ENCODE measurements at regions of chr2 and their contacts with region 1.

Region 1: DNA sequence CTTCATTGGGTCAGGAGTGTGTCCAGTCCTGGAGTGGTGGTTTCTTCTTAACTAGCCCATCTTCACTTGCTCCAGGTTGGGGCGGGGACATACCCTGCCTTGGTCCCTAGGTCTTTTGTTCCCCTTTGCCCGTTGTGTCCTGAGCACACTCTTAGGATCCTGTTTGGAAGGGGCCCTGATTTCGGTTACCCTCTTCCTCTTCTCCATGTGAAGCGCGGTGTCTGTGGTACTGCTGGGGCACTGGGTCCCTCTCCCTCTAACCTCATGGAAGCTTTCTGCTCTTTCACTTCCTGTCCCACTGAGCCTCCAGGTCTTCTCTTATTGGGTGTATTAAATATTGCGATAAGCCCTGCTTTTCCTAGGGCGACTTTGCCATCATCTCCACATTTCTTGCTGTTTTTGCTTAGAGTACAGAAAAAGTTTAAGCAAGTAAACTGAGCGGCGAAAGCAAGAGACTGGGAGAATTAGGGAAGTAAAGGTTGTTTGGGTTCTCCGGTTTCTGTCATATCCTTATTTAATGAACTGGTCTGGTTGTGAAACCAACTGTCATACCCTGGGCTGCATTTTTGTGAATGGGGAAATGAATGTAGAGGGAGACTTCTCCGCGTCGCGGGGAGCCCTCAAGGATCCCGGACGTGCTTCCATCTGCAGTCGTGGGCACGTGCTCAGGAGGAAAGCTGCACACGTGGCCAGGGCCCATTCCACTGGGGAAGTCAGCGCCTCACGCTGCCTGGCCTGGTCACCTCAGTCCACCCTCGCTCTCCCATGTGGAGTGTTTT is 73.8 kb upstream of the B3GNT7 start:
- DNase-seq: no peak
- ATAC-seq: no peak
- H3K4me3 ChIP-seq: no peak overlapping the region
- H3K27ac ChIP-seq: no peak overlapping the region
- H3K4me1 ChIP-seq: no peaks in the 10 kb centered on the region
- H3K27me3 ChIP-seq: no peaks in the 10 kb centered on the region
- CTCF ChIP-seq: no peak

Region 2: GRCh38 chr2:231245253-231246094 is 76.3 kb before region 1 on chr2:
- CTCF ChIA-PET with region 1: no interaction called
- POLR2A ChIA-PET with region 1: no interaction called
- in situ Hi-C with region 1: no loop called
- intact Hi-C with region 1: no loop called
- DNase-seq: no peak
- ATAC-seq: peak; percentile 70
- H3K4me3 ChIP-seq: no peak overlapping the region
- H3K27ac ChIP-seq: no peak overlapping the region
- H3K4me1 ChIP-seq: no peaks in the 10 kb centered on the region
- H3K27me3 ChIP-seq: no peaks in the 10 kb centered on the region
- CTCF ChIP-seq: no peak; the same call in 1 of the 2 replicates

Region 3: DNA sequence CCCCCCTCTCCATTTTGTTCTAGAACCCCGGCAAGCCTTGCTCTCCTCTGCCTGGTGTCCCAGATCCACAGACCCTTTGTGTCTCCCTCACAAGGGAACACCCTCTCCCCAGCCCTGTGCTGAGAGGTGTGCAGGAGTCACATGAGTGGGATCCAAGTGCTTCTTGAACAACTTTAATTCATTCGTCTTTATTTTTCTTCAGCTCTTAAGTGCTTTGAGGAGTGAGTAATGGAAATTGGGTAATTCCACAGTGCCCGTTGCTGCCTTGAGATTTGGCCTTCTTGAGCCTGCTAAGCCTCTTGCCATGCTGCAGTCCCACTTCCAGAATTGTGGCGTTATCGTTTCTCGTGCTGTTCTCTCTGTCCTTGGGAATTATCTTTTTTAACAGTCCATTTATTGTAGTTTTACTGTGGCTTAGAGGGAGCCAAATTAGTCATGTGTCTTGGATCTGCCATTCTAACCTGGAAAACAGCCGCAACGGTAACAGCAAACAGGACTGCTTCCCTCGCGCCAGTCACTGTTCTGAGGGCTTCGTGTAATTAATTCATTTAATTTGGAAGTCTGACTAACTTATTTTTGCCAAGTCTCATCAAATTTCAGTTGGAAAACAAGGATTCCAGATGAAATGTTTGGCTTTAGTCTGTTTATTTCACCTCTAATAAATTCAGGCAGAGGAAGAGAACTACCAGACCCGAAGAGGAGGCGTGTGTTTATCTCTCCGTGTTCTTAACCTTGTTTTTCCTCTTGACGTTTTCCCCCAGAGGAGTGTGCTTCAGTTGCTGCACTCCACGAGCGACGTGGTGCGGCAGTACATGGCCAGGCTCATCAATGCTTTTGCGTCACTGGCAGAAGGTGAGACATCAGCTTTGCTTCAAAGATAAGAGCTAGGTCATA is 51.3 kb before region 1 on chr2:
- CTCF ChIA-PET with region 1: no interaction called
- POLR2A ChIA-PET with region 1: no interaction called
- in situ Hi-C with region 1: loop called (anchors 10 kb)
- intact Hi-C with region 1: no loop called
- DNase-seq: no peak
- ATAC-seq: no peak
- H3K4me3 ChIP-seq: no peak overlapping the region
- H3K27ac ChIP-seq: no peak overlapping the region
- H3K4me1 ChIP-seq: no peaks in the 10 kb centered on the region
- H3K27me3 ChIP-seq: no peaks in the 10 kb centered on the region
- CTCF ChIP-seq: no peak

Region 4: GRCh38 chr2:231514103-231514950 is 192.6 kb after region 1 on chr2:
- CTCF ChIA-PET with region 1: no interaction called
- POLR2A ChIA-PET with region 1: no interaction called
- in situ Hi-C with region 1: no loop called
- intact Hi-C with region 1: no loop called
- DNase-seq: peak; percentile 75
- ATAC-seq: peak; percentile 100
- H3K4me3 ChIP-seq: peak overlapping the region; percentile 82 to 96
- H3K27ac ChIP-seq: peak overlapping the region; percentile 97
- H3K4me1 ChIP-seq: peaks cover 12% of the 10 kb centered on the region
- H3K27me3 ChIP-seq: no peaks in the 10 kb centered on the region
- CTCF ChIP-seq: no peak